HCT116 (cell line): ENCODE measurements at regions of chr5 and their contacts with region 1.

Region 1: GRCh38 chr5:78008356-78008967 is 232.3 kb upstream of the TBCA start:
- DNase-seq: peak; percentile 21
- ATAC-seq: peak; percentile 72
- H3K4me3 ChIP-seq: no peak overlapping the region
- H3K27ac ChIP-seq: no peak overlapping the region
- H3K4me1 ChIP-seq: no peaks in the 10 kb centered on the region
- H3K27me3 ChIP-seq: no peaks in the 10 kb centered on the region
- CTCF ChIP-seq: peak; percentile 63 to 86 (median 85); a peak in 5 of 6 replicates
- POLR2A ChIP-seq: no peak
- RAD21 ChIP-seq: peak; percentile 78

Region 2: GRCh38 chr5:77645158-77645994 is 363.1 kb before region 1 on chr5:
- CTCF ChIA-PET with region 1: interaction called, 3 read pairs
- POLR2A ChIA-PET with region 1: no interaction called
- RAD21 ChIA-PET with region 1: no interaction called
- intact Hi-C with region 1: loop called (anchors 2 kb)
- DNase-seq: peak; percentile 29
- ATAC-seq: peak; percentile 98
- H3K4me3 ChIP-seq: peak overlapping the region; percentile 52 to 63
- H3K27ac ChIP-seq: no peak overlapping the region
- H3K4me1 ChIP-seq: peaks cover 3 to 11% of the 10 kb centered on the region in 2 experiments; a peak in 1 of 4 replicates
- H3K27me3 ChIP-seq: no peaks in the 10 kb centered on the region
- CTCF ChIP-seq: peak in 2 of 3 experiments; percentile 50 to 52; a peak in 3 of 6 replicates
- POLR2A ChIP-seq: no peak
- RAD21 ChIP-seq: 0 out of 2 replicates have a peak, but pooled peaks have one; percentile 26

Region 3: GRCh38 chr5:77663090-77663863 is 345.2 kb before region 1 on chr5:
- CTCF ChIA-PET with region 1: no interaction called
- POLR2A ChIA-PET with region 1: no interaction called
- RAD21 ChIA-PET with region 1: no interaction called
- intact Hi-C with region 1: no loop called
- DNase-seq: no peak
- ATAC-seq: no peak
- H3K4me3 ChIP-seq: no peak overlapping the region
- H3K27ac ChIP-seq: no peak overlapping the region
- H3K4me1 ChIP-seq: no peaks in the 10 kb centered on the region
- H3K27me3 ChIP-seq: no peaks in the 10 kb centered on the region
- CTCF ChIP-seq: no peak
- POLR2A ChIP-seq: no peak
- RAD21 ChIP-seq: no peak

Region 4: GRCh38 chr5:77867194-77867691 is 141.2 kb before region 1 on chr5:
- CTCF ChIA-PET with region 1: no interaction called
- POLR2A ChIA-PET with region 1: no interaction called
- RAD21 ChIA-PET with region 1: no interaction called
- intact Hi-C with region 1: loop called (anchors 5 kb)
- DNase-seq: no peak
- ATAC-seq: peak; percentile 85
- H3K4me3 ChIP-seq: no peak overlapping the region
- H3K27ac ChIP-seq: no peak overlapping the region
- H3K4me1 ChIP-seq: no peaks in the 10 kb centered on the region
- H3K27me3 ChIP-seq: no peaks in the 10 kb centered on the region
- CTCF ChIP-seq: peak; percentile 12 to 42 (median 38); a peak in 4 of 6 replicates
- POLR2A ChIP-seq: no peak
- RAD21 ChIP-seq: peak; percentile 32; the same call in 1 of the 2 replicates

Region 5: GRCh38 chr5:77973253-77973609 is 35.2 kb before region 1 on chr5:
- CTCF ChIA-PET with region 1: no interaction called
- POLR2A ChIA-PET with region 1: no interaction called
- RAD21 ChIA-PET with region 1: no interaction called
- intact Hi-C with region 1: no loop called
- DNase-seq: no peak
- ATAC-seq: no peak
- H3K4me3 ChIP-seq: no peak overlapping the region
- H3K27ac ChIP-seq: no peak overlapping the region
- H3K4me1 ChIP-seq: no peaks in the 10 kb centered on the region
- H3K27me3 ChIP-seq: 0 out of 2 replicates have a peak, but pooled peaks cover 4% of the 10 kb centered on the region
- CTCF ChIP-seq: no peak
- POLR2A ChIP-seq: no peak
- RAD21 ChIP-seq: no peak